MCF 10A (cell line): ENCODE measurements at regions of chr12 and their contacts with region 1.

Region 1: GRCh38 chr12:32727237-32727636 is 28.5 kb downstream of the YARS2 start:
- DNase-seq: no peak
- H3K4me3 Mint-ChIP-seq: no peak overlapping the region
- H3K27ac Mint-ChIP-seq: no peak overlapping the region
- H3K4me1 Mint-ChIP-seq: no peaks in the 10 kb centered on the region
- H3K27me3 Mint-ChIP-seq: no peaks in the 10 kb centered on the region
- CTCF ChIP-seq: no peak

Region 2: GRCh38 chr12:32377344-32378055 is 349.7 kb before region 1 on chr12:
- CTCF ChIA-PET with region 1: no interaction called
- POLR2A ChIA-PET with region 1: no interaction called
- intact Hi-C with region 1: no loop called
- DNase-seq: no peak
- H3K4me3 Mint-ChIP-seq: no peak overlapping the region
- H3K27ac Mint-ChIP-seq: no peak overlapping the region
- H3K4me1 Mint-ChIP-seq: no peaks in the 10 kb centered on the region
- H3K27me3 Mint-ChIP-seq: no peaks in the 10 kb centered on the region
- CTCF ChIP-seq: no peak

Region 3: DNA sequence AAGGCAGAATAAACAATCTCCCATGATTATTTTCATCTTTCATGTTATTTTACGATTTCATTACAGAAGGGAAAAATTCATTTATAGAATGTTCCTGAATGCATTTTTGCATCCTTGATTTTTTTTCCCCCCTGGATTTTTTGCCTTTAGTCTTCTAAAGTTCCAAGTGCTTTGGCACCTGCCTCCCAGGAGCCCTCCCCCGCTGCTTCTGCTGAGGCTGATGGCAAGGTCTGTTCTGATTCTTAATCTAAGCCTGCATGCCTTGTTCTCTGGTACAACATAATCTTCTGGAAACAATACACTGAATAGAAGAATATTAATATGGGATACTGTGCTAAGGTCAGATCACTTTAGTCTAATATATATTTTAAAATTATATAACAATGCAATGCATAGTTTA is 10.5 kb after region 1 on chr12:
- CTCF ChIA-PET with region 1: interaction called, 10 read pairs
- POLR2A ChIA-PET with region 1: interaction called, 4 read pairs
- intact Hi-C with region 1: no loop called
- DNase-seq: no peak
- H3K4me3 Mint-ChIP-seq: no peak overlapping the region
- H3K27ac Mint-ChIP-seq: no peak overlapping the region
- H3K4me1 Mint-ChIP-seq: no peaks in the 10 kb centered on the region
- H3K27me3 Mint-ChIP-seq: no peaks in the 10 kb centered on the region
- CTCF ChIP-seq: no peak